Activated CD8-positive, alpha-beta memory T cell treated with anti-CD3 and anti-CD28 coated beads, Interleukin-2, amount 10 ng/mL, durations not matched to agents 7 days and 5 days (primary cell): ENCODE measurements at regions of chr17 and their contacts with region 1.

Region 1: GRCh38 chr17:58317421-58318064 is 11.1 kb downstream of the TSPOAP1 start:
- DNase-seq: peak; percentile 88
- ATAC-seq: peak; percentile 89
- H3K4me3 Mint-ChIP-seq: no peak overlapping the region
- H3K27ac Mint-ChIP-seq: peak overlapping the region; percentile 84
- H3K4me1 Mint-ChIP-seq: peaks cover 14% of the 10 kb centered on the region
- H3K27me3 Mint-ChIP-seq: no peaks in the 10 kb centered on the region

Region 2: GRCh38 chr17:58224315-58224714 is 93.2 kb before region 1 on chr17:
- CTCF ChIA-PET with region 1: no interaction called
- DNase-seq: no peak
- ATAC-seq: peak; percentile 46
- H3K4me3 Mint-ChIP-seq: no peak overlapping the region
- H3K27ac Mint-ChIP-seq: no peak overlapping the region
- H3K4me1 Mint-ChIP-seq: peaks cover 14% of the 10 kb centered on the region
- H3K27me3 Mint-ChIP-seq: peaks cover 29% of the 10 kb centered on the region

Region 3: GRCh38 chr17:58277107-58277801 is 40.3 kb before region 1 on chr17:
- CTCF ChIA-PET with region 1: no interaction called
- DNase-seq: no peak
- ATAC-seq: no peak
- H3K4me3 Mint-ChIP-seq: no peak overlapping the region
- H3K27ac Mint-ChIP-seq: no peak overlapping the region
- H3K4me1 Mint-ChIP-seq: peaks cover 15% of the 10 kb centered on the region
- H3K27me3 Mint-ChIP-seq: peaks cover 40% of the 10 kb centered on the region

Region 4: DNA sequence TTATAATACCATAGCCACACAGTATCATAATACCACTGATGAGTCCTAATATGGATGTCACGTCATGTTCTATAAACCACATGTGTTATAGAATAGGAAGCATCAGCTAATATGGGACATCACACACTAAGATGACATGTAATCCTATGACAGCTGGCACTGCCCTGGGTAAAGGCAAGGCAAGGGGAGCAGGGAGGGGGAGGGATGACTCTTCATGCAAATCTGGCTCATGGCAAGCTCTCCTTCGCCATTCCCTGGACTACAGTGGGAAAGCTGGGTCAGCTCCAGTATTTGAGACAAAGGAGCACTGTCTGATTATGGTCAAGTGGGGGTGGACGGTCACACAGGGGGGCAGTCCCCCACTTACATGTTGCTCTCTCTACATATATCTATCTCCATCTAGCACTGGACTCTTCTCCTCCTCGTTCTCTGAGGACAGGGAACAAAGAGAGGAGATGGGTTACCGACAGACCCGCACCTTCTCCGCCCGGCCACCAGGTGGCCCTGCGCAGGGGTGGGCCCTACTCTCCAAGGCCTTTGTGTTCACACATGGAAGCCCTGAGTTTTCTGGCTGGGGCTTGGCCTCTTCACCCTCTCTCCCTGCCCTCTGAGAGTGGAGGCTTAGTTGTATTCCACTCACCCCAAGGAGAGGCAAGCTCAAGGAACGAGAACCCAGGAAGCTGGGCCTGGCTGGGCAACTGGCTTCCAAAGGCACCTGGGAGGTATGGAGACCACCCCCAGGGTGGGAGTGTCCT is 13.4 kb before region 1 on chr17:
- CTCF ChIA-PET with region 1: interaction called, 50 read pairs
- DNase-seq: peak; percentile 72
- ATAC-seq: peak; percentile 76
- H3K4me3 Mint-ChIP-seq: no peak overlapping the region
- H3K27ac Mint-ChIP-seq: no peak overlapping the region
- H3K4me1 Mint-ChIP-seq: peaks cover 2% of the 10 kb centered on the region
- H3K27me3 Mint-ChIP-seq: peaks cover 3% of the 10 kb centered on the region

Region 5: DNA sequence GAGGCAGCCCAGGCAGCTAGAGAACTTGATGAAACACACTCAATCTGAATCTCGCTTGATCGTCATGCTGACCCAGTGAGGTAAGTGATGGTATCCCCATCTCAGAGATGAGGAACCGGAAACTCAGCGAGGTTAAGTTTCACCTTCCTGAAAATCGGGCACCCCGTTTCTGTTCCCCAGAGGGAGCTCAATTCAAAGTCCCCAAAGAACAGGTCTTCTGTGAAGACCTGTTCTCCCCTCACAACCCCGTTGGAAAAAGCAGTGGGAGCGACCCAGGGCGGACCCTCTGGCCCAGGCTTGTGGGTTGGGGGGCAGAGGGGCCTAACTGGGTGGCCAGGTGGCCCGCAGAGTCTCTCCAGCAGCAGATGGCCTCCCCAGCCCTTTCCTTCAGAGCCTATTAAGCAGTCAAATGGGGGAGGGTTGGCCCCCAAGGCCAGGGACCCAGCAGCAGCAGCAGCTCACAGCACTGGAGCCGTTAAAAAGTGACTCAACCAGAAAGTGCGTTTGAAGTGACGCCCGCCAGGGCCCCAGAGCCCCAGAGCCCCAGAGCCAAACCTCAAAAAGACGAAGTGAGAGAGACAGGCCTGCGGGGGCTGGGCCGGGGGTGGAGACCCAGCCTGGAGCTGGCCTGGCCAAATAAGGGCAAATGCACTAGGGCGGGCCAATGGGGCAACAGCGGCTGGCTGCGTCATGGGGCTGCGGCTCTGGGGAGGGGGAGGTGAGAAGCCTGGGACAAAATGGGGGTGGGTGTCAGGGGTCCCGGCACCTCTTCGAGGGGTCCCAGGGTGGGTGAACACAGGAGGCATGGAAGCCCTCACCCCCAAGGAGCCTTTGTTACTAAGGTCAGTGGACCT is 20.3 kb after region 1 on chr17:
- CTCF ChIA-PET with region 1: interaction called, 136 read pairs
- DNase-seq: peak; percentile 98
- ATAC-seq: peak; percentile 70
- H3K4me3 Mint-ChIP-seq: peak overlapping the region; percentile 83
- H3K27ac Mint-ChIP-seq: peak overlapping the region; percentile 98
- H3K4me1 Mint-ChIP-seq: peaks cover 48% of the 10 kb centered on the region
- H3K27me3 Mint-ChIP-seq: no peaks in the 10 kb centered on the region

Region 6: GRCh38 chr17:58352014-58352842 is 34.7 kb after region 1 on chr17 and contains the start of gene SUPT4H1:
- CTCF ChIA-PET with region 1: interaction called, 50 read pairs
- DNase-seq: peak; percentile 93
- ATAC-seq: peak; percentile 92
- H3K4me3 Mint-ChIP-seq: peak within 1 kb of the TSS; percentile 98
- H3K27ac Mint-ChIP-seq: peak within 1 kb of the TSS; percentile 96
- H3K4me1 Mint-ChIP-seq: peaks cover 50% of the 10 kb centered on the region
- H3K27me3 Mint-ChIP-seq: no peaks in the 10 kb centered on the region
- total RNA-seq, gene SUPT4H1: 63.3 to 127 TPM

Region 7: DNA sequence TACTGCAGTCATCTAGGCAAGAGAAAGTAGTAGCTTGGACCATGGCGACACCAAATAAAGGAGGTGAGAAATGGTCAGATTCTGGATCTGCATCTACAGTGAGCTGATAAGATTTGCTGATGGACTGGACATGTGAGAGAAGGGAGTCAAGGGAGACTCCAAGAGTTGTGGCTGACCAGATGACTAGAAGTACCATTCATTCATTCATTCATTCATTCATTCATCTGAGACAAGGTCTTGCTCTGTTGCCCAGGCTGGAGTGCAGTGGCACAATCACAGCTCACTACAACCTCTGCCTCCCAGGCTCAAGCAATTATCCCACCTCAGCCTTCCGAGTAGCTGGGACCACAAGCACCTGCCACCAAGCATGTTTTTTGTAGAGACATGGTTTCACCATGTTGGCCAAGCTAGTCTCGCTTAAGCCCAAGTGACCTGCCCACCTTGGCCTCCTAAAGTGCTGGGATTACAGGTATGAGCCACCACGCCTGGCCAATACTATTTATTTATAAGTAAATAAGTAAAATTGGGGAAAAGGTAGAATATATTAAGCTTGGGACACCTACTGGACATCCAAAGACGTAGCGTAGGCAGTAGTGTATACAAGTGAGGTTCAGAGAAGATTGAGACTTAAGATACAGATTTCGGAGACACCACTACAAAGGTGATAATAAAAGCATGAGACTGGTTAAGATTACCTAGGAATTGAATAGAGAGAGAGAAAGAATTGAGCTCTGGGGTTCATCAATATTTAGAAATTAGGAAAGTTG is 115.4 kb after region 1 on chr17:
- CTCF ChIA-PET with region 1: interaction called, 13 read pairs
- DNase-seq: no peak
- ATAC-seq: no peak
- H3K4me3 Mint-ChIP-seq: no peak overlapping the region
- H3K27ac Mint-ChIP-seq: no peak overlapping the region
- H3K4me1 Mint-ChIP-seq: peaks cover 1% of the 10 kb centered on the region
- H3K27me3 Mint-ChIP-seq: no peaks in the 10 kb centered on the region

Region 8: GRCh38 chr17:58487589-58488427 is 170.3 kb after region 1 on chr17 and contains the start of gene HSF5:
- CTCF ChIA-PET with region 1: interaction called, 11 read pairs
- DNase-seq: peak; percentile 77
- ATAC-seq: peak; percentile 82
- H3K4me3 Mint-ChIP-seq: peak within 1 kb of the TSS; percentile 33
- H3K27ac Mint-ChIP-seq: peak within 1 kb of the TSS; percentile 36
- H3K4me1 Mint-ChIP-seq: peaks cover 13% of the 10 kb centered on the region
- H3K27me3 Mint-ChIP-seq: no peaks in the 10 kb centered on the region
- total RNA-seq, gene HSF5: 0.41 to 0.61 TPM